MCF 10A (cell line): ENCODE measurements at regions of chr5 and their contacts with region 1.

Region 1: DNA sequence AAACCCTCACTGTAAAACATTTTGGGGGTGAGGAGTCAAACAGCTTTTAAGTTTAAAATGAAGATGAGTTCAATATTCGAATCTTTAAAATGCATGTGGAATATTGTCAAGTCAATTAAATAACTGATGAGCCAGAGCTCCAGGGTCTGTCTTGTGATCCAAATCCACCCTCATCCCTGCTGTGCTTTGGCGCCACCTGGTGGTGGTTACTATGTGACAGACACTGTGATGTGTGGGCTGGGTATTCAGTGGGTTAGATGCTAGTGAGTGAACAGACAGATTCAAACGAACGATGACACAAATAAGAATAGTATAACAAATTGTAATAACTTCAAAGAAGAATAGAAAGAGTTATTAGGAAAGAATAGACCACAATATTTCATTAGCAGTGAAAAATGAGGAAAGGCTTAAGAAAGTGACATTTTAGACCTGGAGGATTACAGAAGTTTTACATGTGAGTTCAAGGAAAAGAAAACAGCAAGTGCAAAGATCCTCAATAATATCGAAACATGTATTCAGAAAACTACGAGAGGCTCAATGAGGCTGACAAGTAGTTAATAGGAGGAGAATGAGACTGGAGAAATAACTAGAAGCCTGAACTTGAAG is 51.4 kb upstream of the CHSY3 start:
- DNase-seq: peak; percentile 94
- H3K4me3 Mint-ChIP-seq: no peak overlapping the region
- H3K27ac Mint-ChIP-seq: no peak overlapping the region
- H3K4me1 Mint-ChIP-seq: peaks cover 10% of the 10 kb centered on the region
- H3K27me3 Mint-ChIP-seq: peaks cover 11% of the 10 kb centered on the region
- CTCF ChIP-seq: peak; percentile 99

Region 2: DNA sequence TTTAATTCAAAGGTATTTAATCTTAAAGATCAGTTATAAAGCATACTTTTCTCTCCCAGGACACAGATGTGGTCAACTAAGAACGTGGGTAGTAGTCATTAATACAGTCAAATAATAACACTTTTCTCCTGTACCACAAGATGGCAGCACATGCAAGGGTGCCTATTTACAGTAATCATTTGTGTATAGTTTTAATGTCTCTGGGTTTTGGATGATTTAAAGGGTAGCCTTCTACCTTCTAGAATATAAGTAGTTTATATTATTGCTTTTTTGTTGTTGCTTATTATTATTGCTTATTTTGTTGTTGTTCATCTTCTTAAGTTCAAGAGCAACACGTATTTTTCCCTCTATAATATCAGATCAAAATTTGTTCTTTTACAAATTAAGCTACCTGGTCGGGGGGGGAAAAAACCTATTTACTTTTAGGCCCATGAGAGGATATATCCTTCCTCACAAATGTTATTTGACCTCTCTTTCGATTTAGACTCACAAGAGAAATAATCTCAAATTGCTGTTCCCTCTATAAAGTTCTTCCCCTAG is 947.2 kb before region 1 on chr5:
- CTCF ChIA-PET with region 1: interaction called, 3 read pairs
- POLR2A ChIA-PET with region 1: no interaction called
- intact Hi-C with region 1: loop called (anchors 10 kb)
- DNase-seq: peak; percentile 90
- H3K4me3 Mint-ChIP-seq: no peak overlapping the region
- H3K27ac Mint-ChIP-seq: no peak overlapping the region
- H3K4me1 Mint-ChIP-seq: no peaks in the 10 kb centered on the region
- H3K27me3 Mint-ChIP-seq: no peaks in the 10 kb centered on the region
- CTCF ChIP-seq: peak; percentile 85

Region 3: DNA sequence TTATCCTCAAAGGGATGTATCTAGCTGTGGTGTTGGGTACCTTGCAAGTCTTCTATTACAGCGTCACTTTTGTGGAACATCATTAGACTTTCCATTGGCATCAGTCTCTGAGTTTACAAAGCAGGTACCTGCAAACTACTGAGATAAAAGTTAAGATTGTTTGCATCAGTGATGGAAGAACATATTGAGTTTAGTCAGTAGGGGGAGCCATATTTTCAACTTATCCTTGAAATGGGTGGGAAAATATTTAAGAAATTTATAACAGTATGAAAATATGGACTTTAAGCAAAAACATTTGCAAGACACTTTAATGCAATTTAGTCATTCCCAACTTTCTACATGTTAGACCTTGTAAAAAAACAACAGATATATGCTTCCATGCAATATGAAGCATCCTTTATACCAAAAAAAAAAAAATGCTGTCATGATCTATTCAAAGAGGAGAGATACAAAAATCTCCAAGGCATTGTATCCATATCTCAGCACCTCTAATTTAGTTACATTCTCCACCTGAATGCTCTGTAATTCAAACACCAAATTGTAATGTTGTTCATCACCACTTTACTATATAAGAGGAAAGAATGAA is 491.3 kb before region 1 on chr5:
- CTCF ChIA-PET with region 1: interaction called, 4 read pairs
- POLR2A ChIA-PET with region 1: no interaction called
- intact Hi-C with region 1: loop called (anchors 5 kb)
- DNase-seq: peak; percentile 47
- H3K4me3 Mint-ChIP-seq: no peak overlapping the region
- H3K27ac Mint-ChIP-seq: no peak overlapping the region
- H3K4me1 Mint-ChIP-seq: no peaks in the 10 kb centered on the region
- H3K27me3 Mint-ChIP-seq: peaks cover 19% of the 10 kb centered on the region
- CTCF ChIP-seq: peak; percentile 62

Region 4: GRCh38 chr5:129639331-129639730 is 213.5 kb before region 1 on chr5:
- CTCF ChIA-PET with region 1: no interaction called
- POLR2A ChIA-PET with region 1: no interaction called
- intact Hi-C with region 1: no loop called
- DNase-seq: peak; percentile 6
- H3K4me3 Mint-ChIP-seq: no peak overlapping the region
- H3K27ac Mint-ChIP-seq: no peak overlapping the region
- H3K4me1 Mint-ChIP-seq: no peaks in the 10 kb centered on the region
- H3K27me3 Mint-ChIP-seq: no peaks in the 10 kb centered on the region
- CTCF ChIP-seq: no peak

Region 5: DNA sequence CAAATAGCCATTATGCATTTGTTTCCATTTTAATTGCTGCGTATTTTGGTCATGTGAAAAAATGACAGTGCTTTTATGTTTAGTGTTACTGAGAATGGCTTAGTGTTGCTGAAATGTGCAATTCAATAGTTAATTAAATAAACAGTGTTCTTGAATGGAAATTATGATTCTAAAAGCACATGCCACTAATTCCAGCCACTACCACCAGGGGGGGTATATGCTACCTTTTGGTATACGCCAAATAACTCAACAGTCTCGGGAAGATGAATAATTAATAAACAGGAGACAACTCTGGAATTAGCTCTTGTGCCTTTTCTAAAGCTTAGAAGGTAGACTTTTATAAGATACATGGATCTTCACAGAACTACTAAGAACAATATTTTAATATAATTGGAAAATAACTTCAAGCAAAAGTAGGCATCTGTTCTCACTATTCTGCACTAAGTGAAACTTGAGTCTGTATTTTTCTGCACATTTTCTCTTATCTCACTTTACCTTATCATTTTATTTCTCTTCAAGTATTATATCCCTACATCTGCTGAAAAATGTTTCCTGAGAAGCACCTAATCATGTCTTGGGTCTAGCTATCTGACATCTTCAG is 188.4 kb before region 1 on chr5:
- CTCF ChIA-PET with region 1: interaction called, 5 read pairs
- POLR2A ChIA-PET with region 1: no interaction called
- intact Hi-C with region 1: loop called (anchors 5 kb)
- DNase-seq: peak; percentile 83
- H3K4me3 Mint-ChIP-seq: no peak overlapping the region
- H3K27ac Mint-ChIP-seq: no peak overlapping the region
- H3K4me1 Mint-ChIP-seq: no peaks in the 10 kb centered on the region
- H3K27me3 Mint-ChIP-seq: no peaks in the 10 kb centered on the region
- CTCF ChIP-seq: peak; percentile 89

Region 6: GRCh38 chr5:129781594-129781993 is 71.3 kb before region 1 on chr5:
- CTCF ChIA-PET with region 1: interaction called, 931 read pairs
- POLR2A ChIA-PET with region 1: no interaction called
- intact Hi-C with region 1: no loop called
- DNase-seq: no peak
- H3K4me3 Mint-ChIP-seq: no peak overlapping the region
- H3K27ac Mint-ChIP-seq: no peak overlapping the region
- H3K4me1 Mint-ChIP-seq: no peaks in the 10 kb centered on the region
- H3K27me3 Mint-ChIP-seq: no peaks in the 10 kb centered on the region
- CTCF ChIP-seq: no peak

Region 7: GRCh38 chr5:129821477-129822131 is 31.2 kb before region 1 on chr5:
- CTCF ChIA-PET with region 1: interaction called, 11 read pairs
- POLR2A ChIA-PET with region 1: interaction called, 3 read pairs
- intact Hi-C with region 1: no loop called
- DNase-seq: no peak
- H3K4me3 Mint-ChIP-seq: no peak overlapping the region
- H3K27ac Mint-ChIP-seq: no peak overlapping the region
- H3K4me1 Mint-ChIP-seq: no peaks in the 10 kb centered on the region
- H3K27me3 Mint-ChIP-seq: no peaks in the 10 kb centered on the region
- CTCF ChIP-seq: no peak

Region 8: DNA sequence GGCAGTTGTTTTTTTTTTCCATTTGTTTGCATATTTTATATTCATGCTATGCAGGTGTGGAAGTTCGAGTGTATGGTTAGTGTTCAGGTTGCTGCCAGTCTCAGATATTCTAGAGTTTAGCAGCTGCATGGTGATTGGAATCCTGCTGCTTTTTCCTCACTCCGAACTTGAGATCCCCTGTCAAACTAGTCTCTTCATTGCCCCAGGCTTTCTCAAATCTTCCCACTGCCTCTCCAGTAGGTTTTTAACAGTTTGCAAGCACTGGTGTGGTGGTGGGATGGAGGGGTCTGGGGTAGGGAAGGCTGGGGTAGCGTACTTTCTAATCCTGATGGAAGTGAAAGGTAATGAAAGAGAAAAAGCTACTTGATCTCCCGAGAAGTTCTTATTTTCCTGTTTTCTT is 164.3 kb after region 1 on chr5:
- CTCF ChIA-PET with region 1: no interaction called
- POLR2A ChIA-PET with region 1: no interaction called
- intact Hi-C with region 1: no loop called
- DNase-seq: no peak
- H3K4me3 Mint-ChIP-seq: no peak overlapping the region
- H3K27ac Mint-ChIP-seq: no peak overlapping the region
- H3K4me1 Mint-ChIP-seq: peaks cover 7% of the 10 kb centered on the region
- H3K27me3 Mint-ChIP-seq: no peaks in the 10 kb centered on the region
- CTCF ChIP-seq: no peak

Region 9: DNA sequence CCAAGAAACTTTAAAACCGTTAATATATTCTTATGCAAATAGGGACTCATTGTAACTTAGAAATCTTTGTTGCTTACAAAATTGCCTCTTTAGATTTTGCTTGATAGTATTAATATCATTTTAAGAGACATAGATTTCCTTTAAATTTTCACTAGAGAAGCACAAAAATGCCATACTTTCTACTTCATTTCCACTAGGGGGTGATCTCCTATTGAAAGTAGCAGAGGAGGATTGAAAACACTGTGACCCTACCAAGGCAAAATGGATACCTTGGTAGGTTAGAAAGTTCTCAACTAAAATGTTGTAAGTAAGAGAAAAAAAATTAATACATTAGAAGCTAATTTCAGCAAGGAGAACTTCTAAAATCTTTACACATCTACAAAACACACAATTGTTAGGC is 256.3 kb after region 1 on chr5:
- CTCF ChIA-PET with region 1: no interaction called
- POLR2A ChIA-PET with region 1: no interaction called
- intact Hi-C with region 1: no loop called
- DNase-seq: peak; percentile 65
- H3K4me3 Mint-ChIP-seq: no peak overlapping the region
- H3K27ac Mint-ChIP-seq: no peak overlapping the region
- H3K4me1 Mint-ChIP-seq: no peaks in the 10 kb centered on the region
- H3K27me3 Mint-ChIP-seq: no peaks in the 10 kb centered on the region
- CTCF ChIP-seq: peak; percentile 83